MCF 10A (cell line): ENCODE measurements at regions of chr18 and their contacts with region 1.

Region 1: GRCh38 chr18:74652392-74652988 is 54.8 kb downstream of the ZNF407 start:
- DNase-seq: peak; percentile 54
- H3K4me3 Mint-ChIP-seq: no peak overlapping the region
- H3K27ac Mint-ChIP-seq: no peak overlapping the region
- H3K4me1 Mint-ChIP-seq: no peaks in the 10 kb centered on the region
- H3K27me3 Mint-ChIP-seq: no peaks in the 10 kb centered on the region
- CTCF ChIP-seq: peak; percentile 38

Region 2: GRCh38 chr18:74665905-74666304 is 13.4 kb after region 1 on chr18:
- CTCF ChIA-PET with region 1: interaction called, 10 read pairs
- POLR2A ChIA-PET with region 1: no interaction called
- intact Hi-C with region 1: no loop called
- DNase-seq: no peak
- H3K4me3 Mint-ChIP-seq: no peak overlapping the region
- H3K27ac Mint-ChIP-seq: no peak overlapping the region
- H3K4me1 Mint-ChIP-seq: no peaks in the 10 kb centered on the region
- H3K27me3 Mint-ChIP-seq: no peaks in the 10 kb centered on the region
- CTCF ChIP-seq: no peak

Region 3: GRCh38 chr18:74963820-74964446 is 311.4 kb after region 1 on chr18:
- CTCF ChIA-PET with region 1: interaction called, 5 read pairs
- POLR2A ChIA-PET with region 1: no interaction called
- intact Hi-C with region 1: loop called (anchors 1 kb)
- DNase-seq: peak; percentile 69
- H3K4me3 Mint-ChIP-seq: no peak overlapping the region
- H3K27ac Mint-ChIP-seq: no peak overlapping the region
- H3K4me1 Mint-ChIP-seq: no peaks in the 10 kb centered on the region
- H3K27me3 Mint-ChIP-seq: no peaks in the 10 kb centered on the region
- CTCF ChIP-seq: peak; percentile 37

Region 4: GRCh38 chr18:75161256-75162028 is 509.0 kb after region 1 on chr18:
- CTCF ChIA-PET with region 1: no interaction called
- POLR2A ChIA-PET with region 1: no interaction called
- intact Hi-C with region 1: loop called (anchors 2 kb)
- DNase-seq: peak; percentile 15
- H3K4me3 Mint-ChIP-seq: no peak overlapping the region
- H3K27ac Mint-ChIP-seq: no peak overlapping the region
- H3K4me1 Mint-ChIP-seq: no peaks in the 10 kb centered on the region
- H3K27me3 Mint-ChIP-seq: peaks cover 21% of the 10 kb centered on the region
- CTCF ChIP-seq: no peak

Region 5: GRCh38 chr18:75896865-75897264 is 1244.4 kb after region 1 on chr18:
- CTCF ChIA-PET with region 1: interaction called, 3 read pairs
- POLR2A ChIA-PET with region 1: no interaction called
- intact Hi-C with region 1: loop called (anchors 10 kb)
- DNase-seq: peak; percentile 46
- H3K4me3 Mint-ChIP-seq: no peak overlapping the region
- H3K27ac Mint-ChIP-seq: no peak overlapping the region
- H3K4me1 Mint-ChIP-seq: no peaks in the 10 kb centered on the region
- H3K27me3 Mint-ChIP-seq: no peaks in the 10 kb centered on the region
- CTCF ChIP-seq: peak; percentile 25

Region 6: DNA sequence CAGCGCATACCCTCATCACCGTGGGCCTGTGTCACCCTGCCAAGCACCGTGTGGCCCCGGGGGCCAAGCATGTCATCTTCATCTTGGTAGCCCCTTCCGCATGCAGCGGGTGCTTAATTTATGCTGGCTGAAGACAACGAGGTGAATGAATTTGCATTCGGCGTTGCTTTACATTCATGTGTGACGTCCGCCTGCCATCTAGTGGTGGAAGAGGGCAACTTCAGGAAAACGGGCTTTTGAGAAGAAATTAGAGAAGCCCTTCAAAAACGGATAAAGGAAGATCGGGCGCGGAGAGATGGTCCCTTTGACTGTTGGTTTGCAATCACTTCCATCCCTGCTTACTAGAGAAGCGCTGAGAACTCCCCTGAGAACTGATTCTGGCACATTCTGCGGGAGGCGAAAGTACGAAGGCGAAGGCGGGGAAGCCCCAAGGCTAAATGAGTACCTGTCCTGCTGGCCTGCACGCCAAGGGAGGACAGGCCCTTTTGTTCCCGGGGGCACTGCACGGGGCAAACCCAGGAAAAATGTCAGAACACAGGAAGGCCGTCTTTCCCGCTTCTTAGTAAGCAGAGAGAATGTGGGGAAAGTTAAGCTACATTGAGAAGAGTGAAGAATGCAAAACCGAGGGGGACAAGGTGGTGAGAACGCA is 1696.7 kb after region 1 on chr18:
- CTCF ChIA-PET with region 1: no interaction called
- POLR2A ChIA-PET with region 1: no interaction called
- intact Hi-C with region 1: loop called (anchors 1 kb)
- DNase-seq: peak; percentile 85
- H3K4me3 Mint-ChIP-seq: peak overlapping the region; percentile 63
- H3K27ac Mint-ChIP-seq: peak overlapping the region; percentile 42
- H3K4me1 Mint-ChIP-seq: peaks cover 21% of the 10 kb centered on the region
- H3K27me3 Mint-ChIP-seq: no peaks in the 10 kb centered on the region
- CTCF ChIP-seq: peak; percentile 83